CD4-positive, alpha-beta memory T cell (primary cell): ENCODE measurements at regions of chr14 and their contacts with region 1.

Region 1: GRCh38 chr14:50060871-50061663 is 55.3 kb downstream of the VCPKMT start:
- DNase-seq: peak in 3 of 5 donors; percentile 15 to 76 (median 22)
- H3K4me3 ChIP-seq: peak overlapping the region in 1 of 2 donors; percentile 62
- H3K4me3 Mint-ChIP-seq: peak overlapping the region in 7 of 8 donors; percentile 87 to 98 (median 94)
- H3K27ac ChIP-seq: peak overlapping the region; percentile 83
- H3K27ac Mint-ChIP-seq: peak overlapping the region; percentile 92 to 100 (median 99)
- H3K4me1 ChIP-seq: peaks cover 82% of the 10 kb centered on the region
- H3K4me1 Mint-ChIP-seq: peaks cover 59 to 95% (median 78%) of the 10 kb centered on the region in 4 donors
- H3K27me3 ChIP-seq: no peaks in the 10 kb centered on the region
- H3K27me3 Mint-ChIP-seq: no peaks in the 10 kb centered on the region

Region 2: GRCh38 chr14:49796025-49796424 is 265.0 kb before region 1 on chr14:
- CTCF ChIA-PET with region 1: no interaction called
- POLR2A ChIA-PET with region 1: no interaction called
- intact Hi-C with region 1: no loop called
- DNase-seq: no peak
- H3K4me3 ChIP-seq: no peak overlapping the region
- H3K4me3 Mint-ChIP-seq: no peak overlapping the region
- H3K27ac ChIP-seq: no peak overlapping the region
- H3K27ac Mint-ChIP-seq: peak overlapping the region in 4 of 7 donors; percentile 11 to 70 (median 56)
- H3K4me1 ChIP-seq: no peaks in the 10 kb centered on the region
- H3K4me1 Mint-ChIP-seq: peaks cover 0 to 4% (median 2%) of the 10 kb centered on the region in 4 donors
- H3K27me3 ChIP-seq: no peaks in the 10 kb centered on the region
- H3K27me3 Mint-ChIP-seq: no peaks in the 10 kb centered on the region

Region 3: DNA sequence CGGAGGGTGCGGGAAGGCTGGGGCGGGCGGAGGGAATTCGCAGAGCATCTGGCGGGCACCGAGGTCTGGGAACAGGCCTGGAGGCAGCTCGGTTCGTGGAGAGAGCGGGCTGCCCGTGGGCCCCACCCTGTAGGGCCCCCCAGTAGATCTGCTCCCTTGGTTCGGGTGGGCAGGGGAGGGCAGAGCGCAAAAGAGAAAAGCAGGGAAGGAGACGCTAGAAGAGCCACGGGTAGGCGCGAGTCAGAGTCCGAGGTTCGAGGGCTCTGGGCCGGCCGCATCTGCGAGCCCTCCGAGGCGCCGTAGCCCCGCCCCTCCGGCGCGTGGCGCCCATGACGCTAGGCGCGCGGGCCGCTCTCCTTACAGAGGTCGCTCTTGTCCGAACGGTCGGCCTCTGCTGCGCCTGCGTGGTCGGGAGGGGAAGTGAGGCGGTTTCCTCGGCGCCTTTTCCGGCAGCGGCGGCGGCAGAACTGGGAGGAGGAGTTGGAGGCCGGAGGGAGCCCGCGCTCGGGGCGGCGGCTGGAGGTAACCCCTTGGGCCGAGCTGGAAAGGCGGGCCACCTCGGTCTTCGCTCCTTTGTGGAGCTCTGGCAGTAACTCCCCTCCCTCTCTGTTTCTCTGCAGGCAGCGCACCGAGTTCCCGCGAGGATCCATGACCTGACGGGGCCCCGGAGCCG is 168.3 kb before region 1 on chr14 and contains the start of gene ARF6:
- CTCF ChIA-PET with region 1: interaction called, 13 read pairs
- POLR2A ChIA-PET with region 1: interaction called, 85 read pairs
- intact Hi-C with region 1: loop called (anchors 1 kb)
- DNase-seq: peak; percentile 92 to 94 (median 92)
- H3K4me3 ChIP-seq: peak within 1 kb of the TSS; percentile 75 to 100
- H3K4me3 Mint-ChIP-seq: peak within 1 kb of the TSS; percentile 95 to 99 (median 98)
- H3K27ac ChIP-seq: peak within 1 kb of the TSS; percentile 98
- H3K27ac Mint-ChIP-seq: peak within 1 kb of the TSS; percentile 93 to 100 (median 99)
- H3K4me1 ChIP-seq: peaks cover 35% of the 10 kb centered on the region
- H3K4me1 Mint-ChIP-seq: peaks cover 13 to 45% (median 22%) of the 10 kb centered on the region in 4 donors
- H3K27me3 ChIP-seq: no peaks in the 10 kb centered on the region
- H3K27me3 Mint-ChIP-seq: no peaks in the 10 kb centered on the region
- total RNA-seq, gene ARF6: 116 to 124 TPM

Region 4: GRCh38 chr14:49971156-49972130 is 89.6 kb before region 1 on chr14:
- CTCF ChIA-PET with region 1: interaction called, 29 read pairs
- POLR2A ChIA-PET with region 1: interaction called, 108 read pairs
- intact Hi-C with region 1: loop called (anchors 1 kb)
- DNase-seq: peak; percentile 75 to 85 (median 82)
- H3K4me3 ChIP-seq: peak overlapping the region; percentile 36 to 44
- H3K4me3 Mint-ChIP-seq: peak overlapping the region; percentile 77 to 89 (median 82)
- H3K27ac ChIP-seq: peak overlapping the region; percentile 73
- H3K27ac Mint-ChIP-seq: peak overlapping the region; percentile 87 to 98 (median 96)
- H3K4me1 ChIP-seq: peaks cover 69% of the 10 kb centered on the region
- H3K4me1 Mint-ChIP-seq: peaks cover 44 to 76% (median 62%) of the 10 kb centered on the region in 4 donors
- H3K27me3 ChIP-seq: no peaks in the 10 kb centered on the region
- H3K27me3 Mint-ChIP-seq: no peaks in the 10 kb centered on the region

Region 5: GRCh38 chr14:50018201-50018932 is 42.7 kb before region 1 on chr14:
- CTCF ChIA-PET with region 1: interaction called, 6 read pairs
- POLR2A ChIA-PET with region 1: interaction called, 11 read pairs
- intact Hi-C with region 1: loop called (anchors 1 kb)
- DNase-seq: no peak
- H3K4me3 ChIP-seq: no peak overlapping the region
- H3K4me3 Mint-ChIP-seq: no peak overlapping the region
- H3K27ac ChIP-seq: no peak overlapping the region
- H3K27ac Mint-ChIP-seq: no peak overlapping the region
- H3K4me1 ChIP-seq: peaks cover 12% of the 10 kb centered on the region
- H3K4me1 Mint-ChIP-seq: peaks cover 14 to 32% (median 18%) of the 10 kb centered on the region in 4 donors
- H3K27me3 ChIP-seq: no peaks in the 10 kb centered on the region
- H3K27me3 Mint-ChIP-seq: no peaks in the 10 kb centered on the region

Region 6: GRCh38 chr14:50091240-50091913 is 30.3 kb after region 1 on chr14:
- CTCF ChIA-PET with region 1: interaction called, 15 read pairs
- POLR2A ChIA-PET with region 1: interaction called, 110 read pairs
- intact Hi-C with region 1: loop called (anchors 2 kb)
- DNase-seq: no peak
- H3K4me3 ChIP-seq: no peak overlapping the region
- H3K4me3 Mint-ChIP-seq: no peak overlapping the region
- H3K27ac ChIP-seq: no peak overlapping the region
- H3K27ac Mint-ChIP-seq: peak overlapping the region in 3 of 7 donors; percentile 9 to 29 (median 25)
- H3K4me1 ChIP-seq: peaks cover 45% of the 10 kb centered on the region
- H3K4me1 Mint-ChIP-seq: peaks cover 31 to 63% (median 47%) of the 10 kb centered on the region in 4 donors
- H3K27me3 ChIP-seq: no peaks in the 10 kb centered on the region
- H3K27me3 Mint-ChIP-seq: no peaks in the 10 kb centered on the region

Region 7: GRCh38 chr14:50260511-50260910 is 199.4 kb after region 1 on chr14:
- CTCF ChIA-PET with region 1: no interaction called
- POLR2A ChIA-PET with region 1: no interaction called
- intact Hi-C with region 1: no loop called
- DNase-seq: peak in 4 of 5 donors; percentile 22 to 34 (median 30)
- H3K4me3 ChIP-seq: no peak overlapping the region
- H3K4me3 Mint-ChIP-seq: no peak overlapping the region
- H3K27ac ChIP-seq: no peak overlapping the region
- H3K27ac Mint-ChIP-seq: peak overlapping the region in 1 of 7 donors; percentile 19
- H3K4me1 ChIP-seq: no peaks in the 10 kb centered on the region
- H3K4me1 Mint-ChIP-seq: peaks cover 0 to 4% (median 2%) of the 10 kb centered on the region in 4 donors
- H3K27me3 ChIP-seq: no peaks in the 10 kb centered on the region
- H3K27me3 Mint-ChIP-seq: no peaks in the 10 kb centered on the region